ENCODE measurements at regions of chr7 and their contacts with region 1.

Region 1: DNA sequence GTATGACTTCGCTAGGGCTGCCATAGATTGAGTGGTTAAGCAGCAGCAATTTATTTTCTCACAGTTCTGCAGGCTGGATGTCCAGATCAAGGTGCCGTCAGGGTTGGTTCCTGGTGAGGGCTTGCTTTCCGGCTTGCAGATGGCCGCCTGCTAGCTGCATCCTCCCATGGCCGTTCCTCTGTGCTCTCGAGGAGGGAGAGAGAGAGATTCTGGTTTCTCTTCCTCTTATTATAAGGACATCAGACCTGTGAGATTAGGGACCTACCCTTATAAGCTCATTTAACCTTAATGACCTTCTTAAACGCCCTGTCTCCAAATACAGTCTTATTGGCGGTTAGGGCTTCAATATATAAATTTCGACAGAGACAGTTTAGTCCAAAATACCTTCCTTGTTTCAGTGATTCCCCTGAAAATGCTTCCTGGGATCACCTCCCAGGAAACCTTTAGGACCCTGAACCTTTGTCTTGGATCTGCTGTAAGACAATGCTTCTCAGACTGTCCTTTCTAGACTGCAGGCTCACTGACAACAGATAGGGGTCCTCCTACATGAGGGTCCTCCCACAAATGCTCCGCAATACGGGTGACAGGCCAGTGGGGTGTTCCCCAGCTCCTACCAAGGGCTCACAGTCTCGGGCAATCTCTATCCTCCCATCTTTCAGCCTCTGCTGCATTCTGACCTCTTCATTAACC is 82.5 kb upstream of the BAIAP2L1 start:
- DNase-seq: peak; percentile 4

Region 2: DNA sequence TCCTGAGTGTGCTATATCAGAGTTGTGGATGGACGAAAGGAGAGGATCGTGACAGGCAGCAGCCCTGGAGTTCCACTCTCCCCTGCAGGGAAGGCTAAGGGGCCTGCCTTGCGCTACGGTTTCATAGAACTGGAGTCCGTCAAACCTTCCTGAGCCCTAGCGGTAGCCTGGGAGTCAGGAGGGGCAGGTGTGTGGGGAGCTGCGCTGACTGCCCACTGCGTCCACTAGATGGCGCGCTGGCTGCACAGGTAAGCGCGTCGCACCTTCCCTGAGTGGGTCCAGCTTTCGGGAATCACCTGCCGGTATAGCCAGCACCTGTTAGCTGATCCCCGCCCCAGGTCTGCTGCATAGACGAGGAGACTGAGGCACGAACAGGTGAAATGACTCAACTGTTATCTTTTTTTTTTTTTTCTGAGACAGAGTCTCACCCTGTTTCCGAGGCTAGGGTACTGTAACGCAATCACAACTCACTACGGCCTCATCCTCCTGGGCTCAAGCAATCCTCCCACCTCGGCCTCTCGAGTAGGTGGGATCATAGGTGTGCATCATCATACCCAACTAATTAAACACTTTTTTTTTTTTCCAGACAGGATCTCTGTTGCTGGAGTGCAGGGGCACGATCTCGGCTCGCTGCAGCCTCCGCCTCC is 62.3 kb before region 1 on chr7:
- intact Hi-C with region 1: no loop called
- DNase-seq: no peak

Region 3: DNA sequence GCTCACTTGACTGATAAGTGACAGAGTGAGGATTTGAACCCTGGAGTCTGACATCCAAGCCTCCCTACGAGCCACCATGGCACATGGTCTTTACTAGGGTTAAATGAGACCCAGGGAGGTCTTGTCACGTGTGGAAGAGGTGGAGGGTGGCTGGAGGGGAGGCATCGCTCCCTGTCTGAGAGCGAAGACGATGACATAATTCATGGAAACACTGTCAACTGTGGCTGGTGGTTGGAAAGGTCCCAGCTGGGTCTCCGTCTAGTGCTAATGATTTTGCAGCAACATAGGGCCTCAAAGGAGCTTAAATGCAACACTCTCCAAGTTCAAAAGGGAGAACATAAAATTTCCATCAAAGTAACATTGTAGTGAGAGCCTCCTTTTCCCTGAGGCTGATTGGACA is 17.3 kb after region 1 on chr7:
- intact Hi-C with region 1: loop called in 1 of 2 experiments (anchors 2 kb)
- DNase-seq: peak; percentile 31